Activated naive CD4-positive, alpha-beta T cell treated with anti-CD3 and anti-CD28 coated beads for 36 hours (primary cell): ENCODE measurements at regions of chr3 and their contacts with region 1.

Region 1: GRCh38 chr3:136818769-136819391 is at the start of gene SLC35G2:
- DNase-seq: peak; percentile 38
- H3K4me3 Mint-ChIP-seq: peak within 1 kb of the TSS; percentile 69
- H3K27ac Mint-ChIP-seq: no peak within 1 kb of the TSS
- H3K4me1 Mint-ChIP-seq: peaks cover 19% of the 10 kb centered on the region
- H3K27me3 Mint-ChIP-seq: peaks cover 39% of the 10 kb centered on the region
- total RNA-seq, gene SLC35G2: 0.31 TPM in 1 of 2 experiments, not detected in the other

Region 2: DNA sequence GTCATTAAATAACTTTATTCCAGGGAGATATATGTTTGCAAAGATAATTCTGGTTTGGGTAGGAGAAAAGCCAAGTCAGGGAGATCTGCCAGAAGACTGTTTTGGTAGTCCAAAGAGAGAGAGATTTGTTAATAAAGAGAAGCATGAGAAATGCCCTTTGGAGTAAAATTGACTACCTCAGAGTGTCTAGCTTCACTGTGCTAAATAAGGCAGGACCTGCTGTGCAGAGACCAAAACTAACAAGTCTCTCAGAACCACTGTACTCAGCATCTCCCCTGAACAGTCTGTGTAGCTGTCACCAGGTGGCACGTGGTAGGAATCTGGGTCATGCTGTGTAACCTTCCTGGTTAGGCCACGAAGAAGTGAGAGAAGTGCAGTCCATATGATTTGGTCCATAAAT is 31.5 kb before region 1 on chr3:
- CTCF ChIA-PET with region 1: no interaction called
- intact Hi-C with region 1: loop called (anchors 2 kb)
- DNase-seq: peak; percentile 43
- H3K4me3 Mint-ChIP-seq: no peak overlapping the region
- H3K27ac Mint-ChIP-seq: no peak overlapping the region
- H3K4me1 Mint-ChIP-seq: peaks cover 15% of the 10 kb centered on the region
- H3K27me3 Mint-ChIP-seq: no peaks in the 10 kb centered on the region

Region 3: DNA sequence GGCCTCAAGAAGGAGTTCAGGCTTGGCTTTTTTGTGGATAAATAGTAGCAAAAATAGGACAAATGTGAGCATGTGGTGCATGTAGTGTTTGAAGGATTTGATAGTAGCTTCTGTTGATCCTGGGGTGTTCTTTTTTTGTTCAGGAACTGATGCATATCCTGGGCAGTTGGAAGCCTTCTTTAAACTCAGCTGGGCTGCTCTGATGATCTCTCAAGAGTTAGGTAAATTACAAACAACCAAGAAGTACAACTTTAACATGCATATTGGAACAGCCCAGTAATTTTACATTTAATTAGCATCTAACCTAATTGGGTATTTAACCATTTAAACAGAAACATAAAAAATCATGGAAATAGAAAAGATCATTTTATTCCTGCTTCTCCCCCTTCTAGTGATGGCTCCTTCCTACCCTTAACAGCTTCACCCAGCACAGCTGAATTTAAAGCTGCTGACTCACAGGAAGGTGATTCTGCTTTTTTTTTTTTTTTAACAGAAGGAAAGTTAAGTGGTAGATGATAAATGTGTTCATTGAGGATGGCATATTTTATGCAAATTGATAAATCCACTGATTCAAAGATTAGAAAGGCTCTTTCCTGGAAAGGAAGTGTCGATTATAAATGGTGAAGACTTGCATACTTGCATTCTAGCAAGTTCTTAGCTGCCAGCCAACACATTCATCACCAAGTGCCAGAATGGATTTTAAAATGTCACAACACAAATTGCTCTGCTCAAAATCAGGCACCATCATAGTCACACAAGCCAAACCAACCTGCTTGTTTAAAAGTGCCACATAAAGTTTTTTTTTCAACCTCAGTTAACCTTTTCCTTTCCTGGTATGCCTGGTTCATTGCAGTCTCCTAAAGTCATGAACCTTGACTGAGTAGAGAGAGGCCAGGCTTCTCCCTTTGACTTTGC is 20.0 kb after region 1 on chr3:
- CTCF ChIA-PET with region 1: no interaction called
- intact Hi-C with region 1: loop called (anchors 1 kb)
- DNase-seq: no peak
- H3K4me3 Mint-ChIP-seq: no peak overlapping the region
- H3K27ac Mint-ChIP-seq: no peak overlapping the region
- H3K4me1 Mint-ChIP-seq: peaks cover 15% of the 10 kb centered on the region
- H3K27me3 Mint-ChIP-seq: no peaks in the 10 kb centered on the region

Region 4: DNA sequence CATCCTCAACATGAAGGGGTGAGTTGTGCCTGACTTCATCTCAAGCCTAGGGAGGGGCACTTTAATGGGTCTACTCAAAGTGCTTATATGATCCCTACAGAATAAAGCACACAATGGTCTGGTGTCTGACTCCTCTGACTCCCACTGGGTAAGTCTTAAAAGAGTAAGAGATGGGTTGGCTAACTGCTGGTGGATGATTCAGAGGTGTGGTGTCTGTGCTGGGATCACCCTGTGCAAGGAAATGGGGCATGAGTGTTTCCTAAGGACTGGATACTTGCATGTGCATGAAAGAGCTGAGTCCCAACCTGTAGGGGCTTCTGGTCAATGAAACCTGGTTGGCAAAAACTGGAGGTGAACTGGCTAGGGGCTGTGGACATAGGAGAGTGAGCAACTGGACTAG is 297.7 kb after region 1 on chr3:
- CTCF ChIA-PET with region 1: no interaction called
- intact Hi-C with region 1: no loop called
- DNase-seq: no peak
- H3K4me3 Mint-ChIP-seq: no peak overlapping the region
- H3K27ac Mint-ChIP-seq: no peak overlapping the region
- H3K4me1 Mint-ChIP-seq: no peaks in the 10 kb centered on the region
- H3K27me3 Mint-ChIP-seq: no peaks in the 10 kb centered on the region